HCT116 (cell line): ENCODE measurements at regions of chr10 and their contacts with region 1.

Region 1: GRCh38 chr10:48363617-48364355 is 57.3 kb downstream of the MAPK8 start:
- DNase-seq: peak; percentile 43
- ATAC-seq: peak; percentile 65
- H3K4me3 ChIP-seq: no peak overlapping the region
- H3K27ac ChIP-seq: no peak overlapping the region
- H3K4me1 ChIP-seq: peaks cover 0 to 2% of the 10 kb centered on the region in 2 experiments; a peak in 1 of 4 replicates
- H3K27me3 ChIP-seq: no peaks in the 10 kb centered on the region
- CTCF ChIP-seq: peak; percentile 51 to 84 (median 79); a peak in 5 of 6 replicates
- POLR2A ChIP-seq: no peak
- RAD21 ChIP-seq: peak; percentile 89

Region 2: DNA sequence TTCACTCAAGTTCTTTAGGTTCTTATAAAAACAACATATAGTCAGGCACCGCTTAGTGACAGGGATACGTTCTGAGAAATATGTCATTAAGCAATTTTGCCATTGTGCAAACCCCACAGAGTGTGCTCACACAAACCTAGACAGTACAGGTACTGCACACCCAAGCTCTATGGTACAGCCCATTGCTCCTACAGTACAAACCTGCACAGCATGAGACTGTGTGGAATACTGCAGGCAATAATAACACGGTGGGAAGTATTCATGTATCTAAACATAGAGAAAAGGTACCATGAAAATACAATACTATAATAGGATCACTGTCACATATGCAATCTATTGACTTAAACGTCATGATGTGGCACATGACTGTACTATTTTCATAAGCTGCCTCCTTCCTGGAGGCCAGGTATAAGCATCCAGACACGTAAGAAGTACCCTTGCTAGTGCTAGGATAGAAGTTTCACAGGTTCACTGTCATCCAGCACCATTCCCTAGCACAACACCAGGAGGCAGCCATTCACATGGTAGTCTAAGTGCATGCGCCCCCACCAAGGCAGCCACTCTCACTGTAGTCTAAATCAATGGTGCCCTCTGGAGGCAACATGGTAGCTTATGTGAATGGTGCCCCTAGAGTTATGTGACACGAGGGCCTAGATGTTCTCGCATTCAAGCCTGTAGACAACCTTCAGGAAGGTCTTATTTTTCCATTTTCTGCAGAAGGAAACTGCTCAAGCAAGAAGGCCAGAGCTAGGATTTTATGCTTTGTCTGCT is 142.5 kb after region 1 on chr10:
- CTCF ChIA-PET with region 1: interaction called, 17 read pairs
- POLR2A ChIA-PET with region 1: no interaction called
- RAD21 ChIA-PET with region 1: no interaction called
- intact Hi-C with region 1: loop called (anchors 1 kb)
- DNase-seq: peak; percentile 68
- ATAC-seq: peak; percentile 96
- H3K4me3 ChIP-seq: no peak overlapping the region
- H3K27ac ChIP-seq: no peak overlapping the region
- H3K4me1 ChIP-seq: peaks cover 5 to 15% of the 10 kb centered on the region in 2 experiments; a peak in 3 of 4 replicates
- H3K27me3 ChIP-seq: no peaks in the 10 kb centered on the region
- CTCF ChIP-seq: peak; percentile 68 to 98 (median 70)
- POLR2A ChIP-seq: no peak
- RAD21 ChIP-seq: peak; percentile 85

Region 3: DNA sequence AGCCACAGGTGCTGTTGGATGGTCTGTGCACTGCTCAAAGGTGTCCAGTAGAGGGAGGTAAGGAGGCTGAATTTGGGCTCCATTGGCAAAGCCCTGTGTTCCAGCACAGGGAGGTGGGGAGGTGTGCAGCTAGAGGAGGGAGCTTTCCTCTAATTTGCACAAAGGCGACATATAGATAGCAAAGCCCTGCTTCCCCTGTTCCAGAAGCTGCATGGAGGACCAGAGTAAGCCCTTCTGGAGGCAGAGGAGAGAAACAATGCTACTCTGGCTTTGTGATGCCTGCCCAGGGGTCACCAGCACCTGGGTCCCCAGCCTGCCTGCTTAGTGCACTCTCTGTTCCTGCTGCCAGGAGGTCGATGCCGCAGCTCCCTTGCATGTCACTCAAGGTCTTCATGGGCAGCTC is 244.5 kb after region 1 on chr10:
- CTCF ChIA-PET with region 1: no interaction called
- POLR2A ChIA-PET with region 1: no interaction called
- RAD21 ChIA-PET with region 1: no interaction called
- intact Hi-C with region 1: loop called (anchors 1 kb)
- DNase-seq: peak; percentile 34
- ATAC-seq: peak; percentile 79
- H3K4me3 ChIP-seq: no peak overlapping the region
- H3K27ac ChIP-seq: no peak overlapping the region
- H3K4me1 ChIP-seq: peaks cover 6 to 31% of the 10 kb centered on the region in 2 experiments
- H3K27me3 ChIP-seq: no peaks in the 10 kb centered on the region
- CTCF ChIP-seq: peak; percentile 63 to 93 (median 79)
- POLR2A ChIP-seq: no peak
- RAD21 ChIP-seq: peak; percentile 40; the same call in 1 of the 2 replicates

Region 4: GRCh38 chr10:48649349-48649944 is 285.7 kb after region 1 on chr10:
- CTCF ChIA-PET with region 1: no interaction called
- POLR2A ChIA-PET with region 1: no interaction called
- RAD21 ChIA-PET with region 1: no interaction called
- intact Hi-C with region 1: loop called (anchors 5 kb)
- DNase-seq: no peak
- ATAC-seq: no peak; the same call in 1 of the 2 replicates
- H3K4me3 ChIP-seq: no peak overlapping the region
- H3K27ac ChIP-seq: no peak overlapping the region
- H3K4me1 ChIP-seq: no peaks in the 10 kb centered on the region
- H3K27me3 ChIP-seq: no peaks in the 10 kb centered on the region
- CTCF ChIP-seq: no peak
- POLR2A ChIP-seq: no peak
- RAD21 ChIP-seq: no peak